ENCODE measurements at regions of chr1 and their contacts with region 1.

Region 1: GRCh38 chr1:36285448-36286101 is 20.6 kb upstream of the SH3D21 start:
- DNase-seq: peak in 4 of 5 donors; percentile 47 to 75 (median 72)
- ATAC-seq: peak; percentile 64 to 78 (median 78)
- H3K4me3 ChIP-seq: no peak overlapping the region
- H3K27ac ChIP-seq: peak overlapping the region in 10 of 12 donors; percentile 29 to 78 (median 68)
- H3K4me1 ChIP-seq: peaks cover 0 to 76% (median 39%) of the 10 kb centered on the region in 12 donors
- H3K27me3 ChIP-seq: no peaks in the 10 kb centered on the region
- CTCF ChIP-seq: peak; percentile 64 to 84 (median 78)
- POLR2A ChIP-seq: no peak

Region 2: DNA sequence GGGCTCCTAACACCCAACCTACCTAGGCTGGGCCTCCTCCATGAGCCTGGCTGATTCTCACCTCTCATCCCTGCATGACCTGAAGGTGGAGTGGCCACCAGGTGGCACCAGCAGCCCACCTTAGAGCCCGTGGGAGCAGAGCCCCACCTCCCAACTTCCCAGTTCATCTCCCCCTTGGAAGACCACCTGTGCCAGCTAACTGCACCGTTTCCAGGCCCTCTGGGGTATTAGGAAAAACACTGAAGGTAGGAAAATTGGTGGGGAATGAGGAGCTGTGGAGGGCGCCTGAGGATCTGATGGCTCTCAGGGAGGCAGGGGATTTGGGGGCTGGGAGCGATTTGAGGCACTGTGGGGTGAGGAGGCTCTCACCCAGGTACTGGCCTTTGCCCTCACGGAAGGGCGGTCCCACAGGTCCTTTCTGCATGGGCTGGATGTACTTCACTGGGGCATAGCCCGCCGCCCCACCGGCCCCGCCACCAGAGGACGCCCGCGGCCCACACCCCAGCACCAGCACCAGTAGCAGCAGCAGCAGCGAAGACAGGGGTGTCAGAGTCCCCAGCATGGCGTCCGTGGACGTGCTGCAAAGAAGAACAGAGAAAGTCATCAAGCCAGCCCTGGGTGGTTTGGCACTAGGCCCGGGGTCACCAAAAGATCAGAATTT is 185.8 kb before region 1 on chr1:
- intact Hi-C with region 1: loop called (anchors 2 to 10 kb)
- DNase-seq: peak; percentile 69 to 89 (median 77)
- ATAC-seq: peak; percentile 80 to 88 (median 84)
- H3K4me3 ChIP-seq: peak overlapping the region in 1 of 12 donors; percentile 7
- H3K27ac ChIP-seq: no peak overlapping the region
- H3K4me1 ChIP-seq: peaks cover 0 to 26% (median 6%) of the 10 kb centered on the region in 12 donors
- H3K27me3 ChIP-seq: no peaks in the 10 kb centered on the region
- CTCF ChIP-seq: peak; percentile 66 to 93 (median 81)
- POLR2A ChIP-seq: no peak

Region 3: GRCh38 chr1:36149237-36149972 is 136.2 kb before region 1 on chr1 and contains the start of gene TRAPPC3:
- intact Hi-C with region 1: loop called (anchors 1 to 5 kb)
- DNase-seq: peak; percentile 100
- ATAC-seq: peak; percentile 90 to 95 (median 92)
- H3K4me3 ChIP-seq: peak within 1 kb of the TSS; percentile 57 to 98 (median 84)
- H3K27ac ChIP-seq: peak within 1 kb of the TSS; percentile 90 to 99 (median 96)
- H3K4me1 ChIP-seq: peaks cover 7 to 62% (median 48%) of the 10 kb centered on the region in 12 donors
- H3K27me3 ChIP-seq: no peaks in the 10 kb centered on the region
- CTCF ChIP-seq: peak; percentile 88 to 100 (median 96)
- POLR2A ChIP-seq: peak in 1 of 2 donors; percentile 93
- total RNA-seq, gene TRAPPC3: 45.3 to 77.2 (median 52.9) TPM

Region 4: DNA sequence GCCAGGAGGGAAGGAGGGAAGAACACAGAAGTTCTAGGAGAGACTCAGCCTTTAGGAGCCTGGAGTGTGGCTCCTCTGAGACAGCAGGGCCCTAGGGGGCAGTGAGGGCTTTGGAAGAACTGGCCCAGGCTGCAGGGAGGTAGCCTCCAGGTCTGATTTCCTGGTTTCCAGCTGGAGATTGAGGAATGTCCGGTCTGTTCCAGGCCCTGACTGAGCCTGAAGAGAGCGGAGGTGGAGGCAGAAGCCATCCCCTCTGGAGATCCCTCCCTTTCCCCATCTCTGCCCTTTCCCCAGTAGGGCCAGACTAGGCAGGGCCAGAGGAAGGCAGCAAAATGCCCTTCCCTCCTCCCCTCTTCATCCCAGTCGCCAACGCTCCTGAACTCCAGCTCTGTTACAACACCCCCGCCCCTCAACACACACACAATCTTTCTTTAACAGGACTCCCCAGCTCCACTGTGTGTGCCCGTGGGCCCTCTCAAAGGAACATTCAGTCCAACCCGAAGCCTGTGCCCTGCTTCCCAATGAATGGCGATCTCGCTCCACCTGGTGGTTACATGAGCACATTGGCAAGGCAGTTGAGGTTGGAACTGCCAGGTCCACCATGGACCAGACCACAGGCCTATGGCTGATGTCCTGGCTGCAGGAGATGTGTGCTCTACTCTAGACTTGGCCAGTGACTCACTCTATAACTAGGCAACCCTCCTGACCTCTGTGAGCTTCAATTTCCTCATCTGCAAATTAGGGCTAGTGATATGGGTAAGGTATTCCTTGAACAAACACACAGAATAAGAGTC is 97.6 kb before region 1 on chr1:
- intact Hi-C with region 1: loop called in 2 of 10 experiments (anchors 10 kb)
- DNase-seq: peak; percentile 86 to 92 (median 88)
- ATAC-seq: peak; percentile 89 to 97 (median 94)
- H3K4me3 ChIP-seq: no peak overlapping the region
- H3K27ac ChIP-seq: peak overlapping the region; percentile 72 to 90 (median 84)
- H3K4me1 ChIP-seq: peaks cover 0 to 15% (median 9%) of the 10 kb centered on the region in 12 donors
- H3K27me3 ChIP-seq: no peaks in the 10 kb centered on the region
- CTCF ChIP-seq: peak; percentile 69 to 94 (median 88)
- POLR2A ChIP-seq: peak in 1 of 2 donors; percentile 36

Region 5: GRCh38 chr1:36203554-36204346 is 81.8 kb before region 1 on chr1:
- intact Hi-C with region 1: loop called in 1 of 10 experiments (anchors 5 kb)
- DNase-seq: peak; percentile 63 to 87 (median 81)
- ATAC-seq: peak; percentile 77 to 85 (median 80)
- H3K4me3 ChIP-seq: peak overlapping the region in 1 of 12 donors; percentile 20
- H3K27ac ChIP-seq: peak overlapping the region; percentile 63 to 96 (median 88)
- H3K4me1 ChIP-seq: peaks cover 0 to 57% (median 24%) of the 10 kb centered on the region in 12 donors
- H3K27me3 ChIP-seq: no peaks in the 10 kb centered on the region
- CTCF ChIP-seq: no peak
- POLR2A ChIP-seq: no peak

Region 6: DNA sequence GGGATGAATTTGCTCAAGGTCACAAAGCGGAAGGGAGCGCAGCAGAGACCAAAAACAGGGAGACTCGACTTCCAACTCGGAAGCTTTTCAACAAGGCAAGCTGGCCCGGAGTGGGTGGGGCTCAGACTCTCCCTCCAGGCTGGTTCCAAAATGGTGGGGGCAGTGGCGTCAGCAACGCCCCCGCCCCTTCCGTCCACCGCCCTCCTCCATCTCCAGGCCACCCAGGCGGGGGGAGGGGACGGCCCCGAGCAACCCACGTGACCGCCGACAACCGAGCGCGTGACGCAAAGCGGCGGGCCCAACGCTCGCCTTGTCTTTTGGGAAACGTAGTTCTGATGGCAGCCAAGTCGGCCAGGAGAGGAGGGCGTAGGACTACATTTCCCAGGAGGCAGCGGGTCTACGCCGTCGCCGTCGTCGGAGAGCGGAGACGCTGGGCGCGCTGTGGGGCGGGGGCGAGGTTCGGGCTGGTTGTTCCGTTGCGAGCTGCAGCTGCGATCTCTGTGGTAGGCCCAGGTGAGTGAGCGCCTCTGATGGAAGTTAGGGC is 61.5 kb before region 1 on chr1 and contains the start of gene THRAP3:
- intact Hi-C with region 1: loop called in 7 of 10 experiments (anchors 2 to 5 kb)
- DNase-seq: peak; percentile 100
- ATAC-seq: peak; percentile 95 to 98 (median 96)
- H3K4me3 ChIP-seq: peak within 1 kb of the TSS; percentile 60 to 92 (median 83)
- H3K27ac ChIP-seq: peak within 1 kb of the TSS; percentile 91 to 99 (median 98)
- H3K4me1 ChIP-seq: peaks cover 0 to 46% (median 42%) of the 10 kb centered on the region in 12 donors
- H3K27me3 ChIP-seq: no peaks in the 10 kb centered on the region
- CTCF ChIP-seq: no peak
- POLR2A ChIP-seq: peak; percentile 75 to 87
- total RNA-seq, gene THRAP3: 68.6 to 106 (median 92.8) TPM

Region 7: DNA sequence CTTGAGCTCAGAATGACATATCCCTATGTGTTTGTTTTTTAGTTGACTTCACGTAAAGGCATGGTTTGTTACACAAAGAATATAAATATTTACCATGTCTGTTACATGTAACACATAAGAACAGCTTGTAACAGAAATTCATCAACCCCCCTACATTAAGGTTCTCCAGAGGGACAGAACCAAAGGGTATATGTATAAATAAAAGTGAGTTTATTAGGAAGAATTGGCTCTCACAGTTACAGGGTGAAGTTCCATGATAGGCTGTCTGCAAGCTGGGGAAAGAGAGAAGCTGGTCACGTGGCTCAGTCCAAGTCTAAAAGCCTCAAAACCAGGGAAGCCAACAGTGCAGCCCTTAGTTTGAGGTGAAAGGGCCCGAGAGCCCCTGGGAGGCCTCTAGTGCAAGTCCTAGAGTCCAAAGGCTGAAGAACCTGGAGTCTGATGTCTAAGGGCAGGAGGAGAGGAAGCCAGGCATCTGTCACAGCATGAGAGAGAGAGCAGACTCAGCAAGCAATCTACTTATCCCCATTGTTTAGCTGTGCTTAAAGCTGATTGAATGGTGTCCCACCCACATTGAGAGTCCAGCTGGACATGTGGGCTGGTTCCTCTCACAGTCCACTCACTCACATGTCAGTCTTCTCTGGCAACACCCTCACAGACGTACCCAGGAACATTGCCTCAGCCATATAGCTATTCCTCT is 45.5 kb before region 1 on chr1:
- intact Hi-C with region 1: loop called in 4 of 10 experiments (anchors 5 to 10 kb)
- DNase-seq: peak in 4 of 5 donors; percentile 63 to 81 (median 79)
- ATAC-seq: peak; percentile 93 to 98 (median 96)
- H3K4me3 ChIP-seq: no peak overlapping the region
- H3K27ac ChIP-seq: peak overlapping the region in 11 of 12 donors; percentile 24 to 72 (median 60)
- H3K4me1 ChIP-seq: peaks cover 0 to 82% (median 67%) of the 10 kb centered on the region in 12 donors
- H3K27me3 ChIP-seq: no peaks in the 10 kb centered on the region
- CTCF ChIP-seq: no peak
- POLR2A ChIP-seq: no peak

Measured in heart left ventricle (tissue), 16 donors.